ENCODE measurements at regions of chr10 and their contacts with region 1.

Region 1: GRCh38 chr10:89470628-89471027 is 56.3 kb downstream of the IFIT5 start:
- DNase-seq: no peak

Region 2: GRCh38 chr10:89426230-89426868 is 44.3 kb before region 1 on chr10:
- intact Hi-C with region 1: no loop called
- DNase-seq: no peak

Region 3: GRCh38 chr10:89516149-89516832 is 45.7 kb after region 1 on chr10:
- intact Hi-C with region 1: loop called in 1 of 2 experiments (anchors 5 kb)
- DNase-seq: no peak

Region 4: GRCh38 chr10:89563861-89564478 is 93.3 kb after region 1 on chr10:
- intact Hi-C with region 1: loop called in 1 of 2 experiments (anchors 5 kb)
- DNase-seq: no peak

Region 5: DNA sequence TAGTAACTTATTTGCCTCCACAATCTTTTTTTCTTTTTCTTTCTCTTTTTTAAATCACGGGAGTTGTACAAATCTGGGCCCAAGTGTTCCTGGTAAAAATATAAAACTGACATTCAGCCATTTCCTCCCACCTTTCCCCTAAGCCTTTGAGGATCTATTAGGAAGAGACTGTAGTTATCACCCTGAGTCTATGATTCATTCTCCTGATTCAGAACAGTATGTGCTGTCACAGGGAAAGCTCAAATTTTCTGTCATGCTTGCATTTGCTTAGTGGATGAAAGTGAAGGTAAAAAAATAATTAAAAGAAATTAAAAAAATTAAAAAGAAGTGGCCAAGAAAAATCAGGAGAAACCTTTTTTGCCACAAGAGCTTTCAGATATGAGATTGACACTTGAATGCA is 302.5 kb after region 1 on chr10:
- intact Hi-C with region 1: no loop called
- DNase-seq: no peak